AG04450 (cell line): ENCODE measurements at regions of chr3 and their contacts with region 1.

Region 1: GRCh38 chr3:105355408-105356061 is 11.2 kb upstream of the ALCAM start:
- DNase-seq: no peak
- H3K4me3 ChIP-seq: no peak overlapping the region
- H3K27ac ChIP-seq: no peak overlapping the region
- H3K27me3 ChIP-seq: no peaks in the 10 kb centered on the region
- CTCF ChIP-seq: no peak

Region 2: GRCh38 chr3:105322570-105323273 is 32.8 kb before region 1 on chr3:
- CTCF ChIA-PET with region 1: no interaction called
- POLR2A ChIA-PET with region 1: no interaction called
- DNase-seq: no peak
- H3K4me3 ChIP-seq: no peak overlapping the region
- H3K27ac ChIP-seq: no peak overlapping the region
- H3K27me3 ChIP-seq: no peaks in the 10 kb centered on the region
- CTCF ChIP-seq: no peak

Region 3: GRCh38 chr3:105366326-105367062 is 11.0 kb after region 1 on chr3 and contains the start of gene ALCAM:
- CTCF ChIA-PET with region 1: interaction called, 4 read pairs
- POLR2A ChIA-PET with region 1: interaction called, 10 read pairs
- DNase-seq: peak; percentile 98
- H3K4me3 ChIP-seq: peak within 1 kb of the TSS; percentile 96
- H3K27ac ChIP-seq: peak within 1 kb of the TSS; percentile 94
- H3K27me3 ChIP-seq: no peaks in the 10 kb centered on the region
- CTCF ChIP-seq: peak; percentile 70
- polyA plus RNA-seq, gene ALCAM: 198 and 275 TPM in 2 replicates

Region 4: DNA sequence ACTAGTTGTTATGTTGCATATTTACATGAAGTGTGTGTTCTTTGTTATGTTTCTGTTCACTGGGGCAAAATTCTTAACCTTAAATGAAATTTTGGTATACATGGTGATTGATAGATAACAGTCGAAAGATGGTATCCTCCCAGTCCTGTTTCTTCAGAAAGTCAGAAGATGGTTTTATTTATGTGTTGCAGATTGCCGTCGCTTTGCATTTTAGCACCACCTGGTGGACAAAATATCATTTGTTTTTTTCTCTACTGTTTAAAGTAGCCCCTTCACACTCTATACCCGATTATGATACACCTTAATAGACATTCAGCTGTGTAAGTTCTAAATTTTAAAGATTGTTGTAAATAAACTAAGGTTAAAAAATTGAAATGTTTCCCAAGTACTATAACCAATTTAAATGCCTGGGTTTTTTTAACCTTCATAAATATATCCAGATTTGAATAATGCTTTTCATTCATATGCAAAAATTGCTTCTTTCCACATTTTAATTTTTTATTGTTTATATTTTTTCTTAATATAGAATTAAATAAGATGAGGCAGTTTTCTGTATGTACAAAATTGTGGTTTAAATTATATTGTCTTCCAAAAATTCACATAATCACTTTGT is 163.4 kb after region 1 on chr3:
- CTCF ChIA-PET with region 1: no interaction called
- POLR2A ChIA-PET with region 1: no interaction called
- DNase-seq: peak; percentile 38
- H3K4me3 ChIP-seq: no peak overlapping the region
- H3K27ac ChIP-seq: no peak overlapping the region
- H3K27me3 ChIP-seq: no peaks in the 10 kb centered on the region
- CTCF ChIP-seq: peak; percentile 64